AG04450 (cell line): ENCODE measurements at regions of chr1 and their contacts with region 1.

Region 1: GRCh38 chr1:115251856-115252255 is 86.2 kb downstream of the NGF start:
- DNase-seq: peak; percentile 84
- H3K4me3 ChIP-seq: no peak overlapping the region; the same call in 1 of the 2 replicates
- H3K27ac ChIP-seq: peak overlapping the region; percentile 77
- H3K27me3 ChIP-seq: no peaks in the 10 kb centered on the region
- CTCF ChIP-seq: no peak

Region 2: GRCh38 chr1:115227346-115228135 is 24.3 kb before region 1 on chr1:
- CTCF ChIA-PET with region 1: no interaction called
- POLR2A ChIA-PET with region 1: interaction called, 16 read pairs
- DNase-seq: no peak
- H3K4me3 ChIP-seq: no peak overlapping the region; the same call in 1 of the 2 replicates
- H3K27ac ChIP-seq: peak overlapping the region; percentile 86
- H3K27me3 ChIP-seq: no peaks in the 10 kb centered on the region
- CTCF ChIP-seq: no peak